ENCODE measurements at regions of chr20 and their contacts with region 1.

Region 1: GRCh38 chr20:50790651-50791277 is 4.1 kb upstream of the BCAS4 start:
- DNase-seq: peak; percentile 87 to 96
- ATAC-seq: peak; percentile 78 to 86
- H3K4me3 ChIP-seq: no peak overlapping the region
- H3K27ac ChIP-seq: peak overlapping the region; percentile 90
- H3K4me1 ChIP-seq: peaks cover 32% of the 10 kb centered on the region
- CTCF ChIP-seq: peak; percentile 68
- EP300 ChIP-seq: no peak
- POLR2A ChIP-seq: peak; percentile 42
- RAD21 ChIP-seq: peak; percentile 31 to 57; a peak in 4 of 5 replicates

Region 2: GRCh38 chr20:50189681-50190582 is 600.8 kb before region 1 on chr20:
- CTCF ChIA-PET with region 1: interaction called, 13 read pairs
- POLR2A ChIA-PET with region 1: interaction called, 4 read pairs
- DNase-seq: peak; percentile 79 to 87
- ATAC-seq: peak; percentile 22 to 45
- H3K4me3 ChIP-seq: peak overlapping the region; percentile 98
- H3K27ac ChIP-seq: peak overlapping the region; percentile 97 to 98
- H3K4me1 ChIP-seq: peaks cover 51% of the 10 kb centered on the region
- CTCF ChIP-seq: peak; percentile 70
- EP300 ChIP-seq: no peak
- POLR2A ChIP-seq: no peak
- RAD21 ChIP-seq: peak; percentile 71 to 89

Region 3: DNA sequence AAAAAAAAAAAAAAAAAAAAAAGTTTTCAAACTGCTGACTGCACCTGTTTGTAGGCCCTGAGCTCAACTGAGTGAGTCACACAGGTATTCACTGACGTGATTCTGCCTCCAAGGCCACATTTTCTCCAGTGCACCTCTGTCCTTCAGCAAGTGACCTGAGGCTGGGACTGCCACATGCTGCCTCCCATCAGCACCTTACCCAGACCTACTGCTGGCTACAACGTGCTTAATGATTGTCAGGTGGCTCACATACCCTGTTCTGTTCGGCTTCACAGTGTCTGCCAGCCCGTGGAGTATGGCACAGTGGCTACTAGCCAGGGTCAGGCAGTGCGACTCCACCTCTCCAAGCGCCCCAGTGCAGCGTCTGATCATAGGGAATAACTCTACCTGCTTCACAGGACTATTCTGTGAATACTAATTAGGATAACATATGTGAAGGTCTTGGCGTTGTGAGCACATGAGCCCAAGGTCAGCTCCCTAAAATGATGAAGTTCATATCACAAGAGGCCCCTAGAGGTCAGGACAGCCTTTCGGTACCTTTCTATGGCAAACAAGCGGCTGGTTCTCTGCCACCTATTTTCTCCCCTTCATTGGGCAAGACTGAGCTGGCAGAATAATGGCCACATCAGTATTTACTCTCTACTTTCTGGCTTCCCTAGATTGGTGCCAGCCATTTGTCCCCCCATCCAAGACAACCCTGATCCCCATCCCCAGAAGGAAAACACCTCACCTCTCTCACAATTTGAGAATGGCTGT is 127.5 kb before region 1 on chr20:
- CTCF ChIA-PET with region 1: interaction called, 90 read pairs
- POLR2A ChIA-PET with region 1: no interaction called
- DNase-seq: peak in 1 of 2 experiments; percentile 79
- ATAC-seq: peak; percentile 81 to 86
- H3K4me3 ChIP-seq: no peak overlapping the region
- H3K27ac ChIP-seq: peak overlapping the region; percentile 56 to 72; a peak in 5 of 6 replicates
- H3K4me1 ChIP-seq: peaks cover 42% of the 10 kb centered on the region
- CTCF ChIP-seq: peak; percentile 65
- EP300 ChIP-seq: no peak
- POLR2A ChIP-seq: no peak
- RAD21 ChIP-seq: peak; percentile 82 to 86

Region 4: DNA sequence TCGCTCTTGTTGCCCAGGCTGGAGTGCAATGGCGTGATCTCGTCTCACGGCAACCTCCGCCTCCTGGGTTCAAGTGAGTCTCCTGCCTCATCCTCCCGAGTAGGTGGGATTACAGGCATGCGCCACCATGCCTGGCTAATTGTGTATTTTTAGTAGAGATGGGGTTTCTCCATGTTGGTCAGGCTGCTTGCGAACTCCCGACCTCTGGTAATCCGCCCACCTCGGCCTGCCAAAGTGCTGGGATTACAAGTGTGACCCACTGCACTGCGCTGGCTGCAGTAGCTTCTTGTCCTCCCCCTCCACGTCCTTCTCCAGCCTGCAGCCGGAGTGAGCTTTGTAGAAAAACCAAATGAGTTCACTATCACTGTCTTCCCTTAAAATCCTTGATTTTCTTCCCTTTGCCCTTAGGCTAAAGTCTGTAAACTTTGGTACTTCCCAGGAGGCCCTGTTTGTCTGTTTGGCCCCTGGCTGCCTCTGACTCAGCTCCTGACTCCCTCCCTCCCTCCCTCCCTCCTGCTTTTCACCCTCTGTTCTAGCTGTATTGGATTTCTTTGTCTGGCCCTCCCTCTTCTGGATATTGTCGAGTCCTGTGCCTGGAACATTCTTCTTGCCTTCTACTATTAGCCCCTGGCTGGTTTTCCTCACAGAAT is 46.5 kb before region 1 on chr20:
- CTCF ChIA-PET with region 1: interaction called, 276 read pairs
- POLR2A ChIA-PET with region 1: interaction called, 8 read pairs
- DNase-seq: peak; percentile 84 to 92
- ATAC-seq: peak; percentile 86 to 97
- H3K4me3 ChIP-seq: peak overlapping the region; percentile 23; the same call in 2 of the 3 replicates
- H3K27ac ChIP-seq: peak overlapping the region; percentile 86 to 94
- H3K4me1 ChIP-seq: peaks cover 90% of the 10 kb centered on the region
- CTCF ChIP-seq: peak; percentile 57
- EP300 ChIP-seq: peak in 1 of 2 experiments; percentile 24; a peak in 1 of 5 replicates
- POLR2A ChIP-seq: no peak
- RAD21 ChIP-seq: peak; percentile 81 to 84

Region 5: DNA sequence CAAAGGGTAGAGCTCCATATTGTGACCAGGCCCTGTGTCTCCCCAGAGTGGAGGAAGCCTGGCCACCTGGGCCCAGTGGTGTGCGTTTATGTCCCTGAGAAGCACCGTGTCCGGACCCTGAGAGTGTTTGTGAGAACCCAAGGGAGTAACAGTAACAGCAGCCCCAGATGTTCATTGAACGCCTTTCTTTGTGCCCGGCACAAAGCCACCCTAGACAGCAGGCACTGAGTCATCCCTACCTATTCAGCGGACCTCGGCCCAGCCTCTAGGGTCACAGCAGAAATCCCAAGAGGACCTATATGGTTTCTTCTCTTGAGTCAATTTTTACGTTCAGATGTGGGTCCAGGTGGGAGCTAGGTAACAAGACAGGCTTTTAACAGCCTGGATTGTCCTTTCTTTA is 28.6 kb after region 1 on chr20:
- CTCF ChIA-PET with region 1: interaction called, 10 read pairs
- POLR2A ChIA-PET with region 1: no interaction called
- DNase-seq: no peak
- ATAC-seq: no peak
- H3K4me3 ChIP-seq: no peak overlapping the region
- H3K27ac ChIP-seq: no peak overlapping the region
- H3K4me1 ChIP-seq: peaks cover 12% of the 10 kb centered on the region
- CTCF ChIP-seq: no peak
- EP300 ChIP-seq: no peak
- POLR2A ChIP-seq: no peak
- RAD21 ChIP-seq: no peak

Region 6: DNA sequence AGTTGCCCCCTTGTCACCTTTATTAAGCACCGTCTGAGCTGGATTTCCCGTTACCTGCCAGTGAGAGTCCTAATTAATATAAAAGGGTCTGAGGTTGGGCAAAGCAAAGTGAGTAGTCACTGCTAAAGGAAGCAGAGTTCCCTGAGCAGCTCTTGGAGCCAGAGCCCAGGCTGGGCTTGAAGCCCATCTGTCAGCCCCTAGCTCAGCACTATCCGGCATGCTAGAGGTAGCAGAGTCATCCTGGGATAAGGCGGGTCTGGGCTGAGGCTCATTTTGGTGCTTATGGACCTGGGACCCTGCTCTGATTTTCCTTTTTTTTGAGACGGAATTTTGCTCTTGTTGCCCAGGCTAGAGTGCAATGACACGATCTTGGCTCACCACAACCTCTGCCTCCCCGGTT is 94.3 kb after region 1 on chr20:
- CTCF ChIA-PET with region 1: interaction called, 15 read pairs
- POLR2A ChIA-PET with region 1: no interaction called
- DNase-seq: no peak
- ATAC-seq: peak in 1 of 2 experiments; percentile 49; a peak in 3 of 6 replicates
- H3K4me3 ChIP-seq: no peak overlapping the region
- H3K27ac ChIP-seq: no peak overlapping the region
- H3K4me1 ChIP-seq: no peaks in the 10 kb centered on the region
- CTCF ChIP-seq: no peak
- EP300 ChIP-seq: no peak
- POLR2A ChIP-seq: no peak
- RAD21 ChIP-seq: no peak

Region 7: GRCh38 chr20:50980851-50981713 is 190.3 kb after region 1 on chr20:
- CTCF ChIA-PET with region 1: interaction called, 11 read pairs
- POLR2A ChIA-PET with region 1: no interaction called
- DNase-seq: peak; percentile 60 to 78
- ATAC-seq: peak; percentile 47 to 73; a peak in 5 of 6 replicates
- H3K4me3 ChIP-seq: no peak overlapping the region
- H3K27ac ChIP-seq: peak overlapping the region; percentile 64 to 83
- H3K4me1 ChIP-seq: peaks cover 41% of the 10 kb centered on the region
- CTCF ChIP-seq: peak; percentile 85
- EP300 ChIP-seq: no peak
- POLR2A ChIP-seq: no peak
- RAD21 ChIP-seq: peak; percentile 72 to 77

Region 8: DNA sequence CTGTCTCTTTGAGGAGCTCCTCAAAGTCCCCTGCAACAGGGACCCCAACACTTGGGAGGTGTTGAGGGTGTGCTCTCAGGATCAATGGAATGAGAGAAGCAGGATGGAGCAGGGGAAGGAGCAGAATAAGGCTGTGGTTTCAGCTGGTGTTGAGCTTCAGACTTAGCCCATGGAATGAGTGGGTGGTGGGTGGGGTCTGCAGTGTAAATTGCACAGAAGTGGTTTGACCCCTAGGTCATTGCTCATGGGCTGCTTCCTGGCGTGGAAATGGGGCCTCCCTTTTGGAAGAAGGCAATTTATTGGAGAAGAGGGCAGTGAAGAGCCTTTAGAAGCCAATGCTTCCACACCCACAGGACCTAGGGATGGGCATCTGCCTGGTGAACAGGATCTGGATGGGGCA is 269.1 kb after region 1 on chr20:
- CTCF ChIA-PET with region 1: no interaction called
- POLR2A ChIA-PET with region 1: no interaction called
- DNase-seq: no peak
- ATAC-seq: no peak; a peak in 1 of 6 replicates
- H3K4me3 ChIP-seq: no peak overlapping the region
- H3K27ac ChIP-seq: no peak overlapping the region
- H3K4me1 ChIP-seq: no peaks in the 10 kb centered on the region
- CTCF ChIP-seq: no peak
- EP300 ChIP-seq: no peak
- POLR2A ChIP-seq: no peak
- RAD21 ChIP-seq: no peak

Measured in A549 (cell line).